Dorsolateral prefrontal cortex (tissue), 120 donors: ENCODE measurements at regions of chr9 and their contacts with region 1.

Region 1: DNA sequence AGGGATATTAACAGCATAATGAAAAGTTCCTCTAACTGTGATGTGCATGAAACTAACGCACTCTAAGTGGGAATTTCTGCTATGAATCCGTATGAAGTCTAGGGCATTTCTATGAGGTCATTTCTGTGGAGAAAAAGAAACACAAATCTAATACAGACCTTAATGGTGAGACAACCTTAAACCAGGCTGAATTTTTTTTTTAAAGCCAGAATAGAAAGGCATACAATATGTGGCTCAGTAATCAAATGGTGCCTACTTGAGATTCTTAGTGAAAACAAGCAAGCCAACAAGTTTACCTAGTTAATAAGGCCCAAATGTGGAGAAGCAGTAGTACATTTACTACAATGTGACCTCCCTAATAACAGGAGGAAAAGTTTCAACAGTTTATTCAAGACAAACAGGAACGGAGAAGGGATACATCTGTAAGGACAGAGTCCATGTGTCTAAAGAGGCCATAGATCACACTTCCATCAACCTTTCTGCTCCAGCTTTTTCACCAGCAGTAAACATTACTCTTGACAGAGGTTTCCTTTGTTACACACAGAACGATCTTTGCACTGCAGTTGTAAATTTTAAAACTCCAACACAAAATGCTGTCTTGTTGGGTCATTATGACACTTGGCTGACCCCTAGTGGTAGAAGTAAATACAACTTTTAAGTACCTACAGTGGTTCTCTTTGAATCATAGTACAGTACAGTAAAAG is 26.2 kb downstream of the CARNMT1 start:
- DNase-seq: no peak
- H3K4me3 ChIP-seq: peak overlapping the region in 30 of 59 donors; percentile 3 to 48 (median 18)
- H3K27ac ChIP-seq: peak overlapping the region in 27 of 59 donors; percentile 2 to 81 (median 48)
- H3K27me3 ChIP-seq: no peaks in the 10 kb centered on the region
- CTCF ChIP-seq: peak; percentile 76 to 98 (median 88)

Region 2: DNA sequence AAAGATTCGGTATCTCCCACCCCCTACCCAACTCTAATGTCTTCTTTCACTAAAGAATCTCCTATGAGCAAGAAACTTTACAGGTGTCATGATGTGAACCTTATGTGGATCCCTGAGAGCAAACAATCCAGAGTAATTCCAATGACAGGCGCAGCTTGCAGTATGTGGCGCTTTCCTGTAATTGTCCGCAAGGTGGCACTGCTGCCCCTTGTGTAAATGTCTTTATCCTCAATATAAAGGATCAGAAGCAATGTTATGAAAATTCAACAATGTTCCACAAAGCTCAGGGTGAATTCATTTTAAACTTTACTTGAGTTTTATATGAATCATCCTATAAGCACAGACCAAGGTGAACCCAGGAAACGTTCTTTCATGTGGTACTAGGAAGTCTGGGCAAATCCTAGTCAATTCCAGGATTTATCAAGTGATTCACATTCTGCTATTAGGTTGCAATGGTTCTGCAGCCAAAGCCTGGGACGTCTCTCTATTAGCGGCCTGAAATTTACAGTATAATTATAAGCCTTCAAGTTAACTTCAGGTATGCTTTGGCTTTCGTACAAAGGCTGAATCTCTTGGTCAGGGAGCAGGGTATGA is 227.9 kb before region 1 on chr9:
- intact Hi-C with region 1: loop called (anchors 1 to 2 kb)
- DNase-seq: peak; percentile 72 to 94 (median 84)
- H3K4me3 ChIP-seq: no peak overlapping the region
- H3K27ac ChIP-seq: peak overlapping the region in 4 of 59 donors; percentile 20 to 83 (median 30)
- H3K27me3 ChIP-seq: peaks cover 0 to 2% (median 0%) of the 10 kb centered on the region in 45 donors
- CTCF ChIP-seq: peak; percentile 83 to 100 (median 94)

Region 3: DNA sequence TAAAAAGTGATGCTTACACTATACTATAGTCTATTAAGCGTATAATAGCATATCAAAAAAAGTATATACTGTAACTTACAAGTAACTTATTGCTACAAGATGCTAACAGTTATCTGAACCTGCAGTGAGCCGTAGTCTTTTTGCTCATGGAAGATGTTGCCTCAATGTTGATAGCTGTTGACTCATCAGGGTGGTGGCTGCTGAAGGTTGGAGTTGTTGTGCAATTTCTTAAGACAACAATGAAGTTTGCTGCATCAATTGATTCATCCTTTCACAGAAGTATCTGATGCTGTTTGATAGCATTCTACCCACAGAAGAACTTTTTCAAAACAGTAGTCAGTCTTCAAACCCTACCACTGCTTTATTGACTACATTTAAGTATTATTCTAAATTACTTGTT is 41.3 kb before region 1 on chr9:
- intact Hi-C with region 1: no loop called
- DNase-seq: no peak
- H3K4me3 ChIP-seq: no peak overlapping the region
- H3K27ac ChIP-seq: no peak overlapping the region
- H3K27me3 ChIP-seq: no peaks in the 10 kb centered on the region
- CTCF ChIP-seq: no peak

Region 4: GRCh38 chr9:75033791-75034473 is 32.1 kb after region 1 on chr9:
- intact Hi-C with region 1: no loop called
- DNase-seq: no peak
- H3K4me3 ChIP-seq: no peak overlapping the region
- H3K27ac ChIP-seq: no peak overlapping the region
- H3K27me3 ChIP-seq: no peaks in the 10 kb centered on the region
- CTCF ChIP-seq: no peak

Region 5: DNA sequence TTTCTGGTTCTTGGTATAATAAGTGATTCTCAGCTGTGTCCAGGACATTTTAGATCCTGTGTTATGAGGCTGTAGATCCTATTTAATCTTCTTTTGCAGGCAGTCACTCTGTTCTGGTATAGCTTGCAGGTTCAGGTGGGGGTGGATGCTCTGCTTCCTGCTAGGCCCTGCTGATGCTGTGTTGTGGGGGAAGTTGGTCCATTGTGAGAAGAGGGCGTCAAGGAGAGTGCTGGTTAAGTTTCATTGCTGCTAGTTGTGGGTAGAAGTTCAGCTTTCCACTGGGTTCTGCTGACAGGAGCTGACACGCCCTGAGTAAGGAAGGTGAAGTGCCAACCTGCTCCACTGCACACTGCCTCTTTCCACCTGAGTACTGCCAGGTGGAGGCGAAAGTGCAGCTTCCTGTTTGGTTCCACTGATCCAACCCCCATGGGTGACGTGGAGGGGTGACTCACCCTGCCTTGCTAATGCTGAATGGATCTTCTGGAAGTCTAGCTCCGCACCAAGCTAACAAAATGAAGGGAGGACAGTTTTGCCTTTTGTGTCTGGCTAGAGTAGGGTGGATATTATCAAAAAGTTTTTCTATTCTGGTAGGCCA is 69.8 kb after region 1 on chr9:
- intact Hi-C with region 1: loop called in 1 of 2 experiments (anchors 5 kb)
- DNase-seq: peak in 1 of 10 donors; percentile 42
- H3K4me3 ChIP-seq: no peak overlapping the region
- H3K27ac ChIP-seq: no peak overlapping the region
- H3K27me3 ChIP-seq: no peaks in the 10 kb centered on the region
- CTCF ChIP-seq: no peak

Region 6: DNA sequence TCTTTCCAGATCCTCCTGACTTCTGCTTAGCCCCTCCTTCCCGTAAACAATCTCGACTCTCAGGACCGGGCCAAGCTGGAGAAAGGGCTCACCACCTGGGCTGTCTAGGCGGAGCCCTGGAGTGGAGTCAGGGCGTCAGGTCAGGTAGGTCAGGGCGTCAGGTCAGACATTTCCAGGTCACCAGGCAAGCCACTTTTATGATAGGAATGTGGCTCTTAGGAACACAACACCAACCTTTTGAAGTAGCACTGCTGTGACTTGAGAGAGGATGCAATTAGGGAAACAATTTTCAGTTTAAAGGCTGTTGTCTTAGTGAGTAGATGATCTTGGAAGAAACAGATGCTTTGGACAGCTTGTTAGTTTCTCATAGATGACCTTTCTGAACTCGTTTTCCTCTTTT is 99.2 kb after region 1 on chr9:
- intact Hi-C with region 1: no loop called
- DNase-seq: no peak
- H3K4me3 ChIP-seq: no peak overlapping the region
- H3K27ac ChIP-seq: peak overlapping the region in 40 of 59 donors; percentile 1 to 87 (median 42)
- H3K27me3 ChIP-seq: no peaks in the 10 kb centered on the region
- CTCF ChIP-seq: no peak

Region 7: GRCh38 chr9:75200892-75201470 is 199.1 kb after region 1 on chr9:
- intact Hi-C with region 1: no loop called
- DNase-seq: no peak
- H3K4me3 ChIP-seq: no peak overlapping the region
- H3K27ac ChIP-seq: no peak overlapping the region
- H3K27me3 ChIP-seq: no peaks in the 10 kb centered on the region
- CTCF ChIP-seq: peak; percentile 56 to 92 (median 74)